ENCODE measurements at regions of chr21 and their contacts with region 1.

Region 1: DNA sequence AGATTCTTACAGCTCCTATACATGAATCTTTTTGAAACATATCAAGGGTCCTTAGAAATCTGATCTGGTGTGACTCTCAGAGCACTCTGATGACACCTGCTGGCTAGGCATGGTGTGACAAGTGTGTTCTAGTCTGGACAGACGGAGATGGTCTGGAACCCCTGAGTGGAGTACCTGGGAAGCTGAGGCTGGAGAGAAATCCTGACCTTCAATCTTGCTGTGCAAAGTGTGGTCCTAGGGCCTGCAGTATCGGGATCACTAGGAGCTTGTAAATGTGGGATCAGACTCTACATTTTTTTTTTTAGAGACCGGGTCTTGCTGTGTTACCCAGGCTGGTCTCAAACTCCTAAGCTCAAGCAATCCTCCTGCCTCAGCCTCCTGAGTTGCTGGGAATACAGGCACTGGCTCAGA is 78.6 kb upstream of the SOD1 start:
- DNase-seq: peak; percentile 87
- ATAC-seq: peak; percentile 95
- H3K4me3 Mint-ChIP-seq: no peak overlapping the region
- H3K27ac Mint-ChIP-seq: no peak overlapping the region
- H3K4me1 Mint-ChIP-seq: 0 out of 2 replicates have a peak, but pooled peaks cover 8% of the 10 kb centered on the region
- H3K27me3 Mint-ChIP-seq: no peaks in the 10 kb centered on the region
- CTCF ChIP-seq: peak; percentile 75

Region 2: GRCh38 chr21:31098576-31099005 is 482.3 kb before region 1 on chr21:
- CTCF ChIA-PET with region 1: interaction called, 11 read pairs
- POLR2A ChIA-PET with region 1: no interaction called
- DNase-seq: peak; percentile 84
- ATAC-seq: peak; percentile 90
- H3K4me3 Mint-ChIP-seq: no peak overlapping the region
- H3K27ac Mint-ChIP-seq: no peak overlapping the region
- H3K4me1 Mint-ChIP-seq: peaks cover 10% of the 10 kb centered on the region
- H3K27me3 Mint-ChIP-seq: no peaks in the 10 kb centered on the region; the same call in 1 of the 2 replicates
- CTCF ChIP-seq: peak; percentile 64

Region 3: DNA sequence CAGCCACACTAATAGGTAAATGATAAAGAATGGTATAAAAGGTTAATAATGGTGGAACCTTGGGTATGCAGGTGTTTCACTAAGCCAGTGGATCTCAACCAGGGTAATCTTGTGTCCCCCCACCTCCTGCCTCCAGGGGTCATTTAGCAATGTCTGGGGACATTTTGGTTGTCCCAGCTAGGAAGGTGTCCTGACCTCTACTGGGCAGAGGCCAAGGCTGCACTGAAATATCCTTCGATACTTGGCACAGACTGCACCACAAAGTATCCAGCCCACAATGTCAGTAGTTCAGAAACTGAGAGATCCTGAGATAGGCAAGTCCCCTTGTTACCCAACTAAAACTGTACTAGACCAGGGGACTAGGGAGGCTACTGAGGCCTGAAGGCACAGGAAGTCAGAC is 123.2 kb before region 1 on chr21:
- CTCF ChIA-PET with region 1: interaction called, 37 read pairs
- POLR2A ChIA-PET with region 1: no interaction called
- DNase-seq: peak; percentile 41
- ATAC-seq: peak; percentile 85
- H3K4me3 Mint-ChIP-seq: no peak overlapping the region
- H3K27ac Mint-ChIP-seq: no peak overlapping the region
- H3K4me1 Mint-ChIP-seq: peaks cover 3% of the 10 kb centered on the region
- H3K27me3 Mint-ChIP-seq: no peaks in the 10 kb centered on the region
- CTCF ChIP-seq: 0 out of 2 replicates have a peak, but pooled peaks have one; percentile 11

Region 4: DNA sequence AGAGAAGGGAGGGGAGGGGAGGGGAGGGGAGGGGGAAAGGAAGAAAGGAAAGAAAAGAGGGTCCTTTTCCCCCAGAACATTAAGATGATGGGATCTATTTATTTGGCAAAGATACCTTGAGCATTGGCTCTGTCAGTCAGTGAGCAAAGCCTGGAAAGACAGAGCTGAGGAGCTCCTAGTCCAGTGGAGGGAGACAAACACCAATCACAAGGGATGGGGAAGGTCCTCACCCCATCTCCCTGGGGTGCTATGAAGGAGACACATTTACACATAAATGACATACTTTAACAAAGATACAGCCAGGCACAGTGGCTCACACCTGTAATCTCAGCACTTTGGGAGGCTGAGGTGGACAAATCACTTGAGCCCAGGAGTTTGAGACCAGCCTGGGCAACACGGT is 81.9 kb before region 1 on chr21:
- CTCF ChIA-PET with region 1: interaction called, 16 read pairs
- POLR2A ChIA-PET with region 1: no interaction called
- DNase-seq: no peak
- ATAC-seq: peak; percentile 86
- H3K4me3 Mint-ChIP-seq: no peak overlapping the region
- H3K27ac Mint-ChIP-seq: peak overlapping the region; percentile 78
- H3K4me1 Mint-ChIP-seq: peaks cover 28% of the 10 kb centered on the region
- H3K27me3 Mint-ChIP-seq: no peaks in the 10 kb centered on the region
- CTCF ChIP-seq: no peak

Region 5: GRCh38 chr21:31548688-31549087 is 32.2 kb before region 1 on chr21:
- CTCF ChIA-PET with region 1: interaction called, 20 read pairs
- POLR2A ChIA-PET with region 1: no interaction called
- DNase-seq: no peak
- ATAC-seq: peak; percentile 38; the same call in 1 of the 2 replicates
- H3K4me3 Mint-ChIP-seq: no peak overlapping the region
- H3K27ac Mint-ChIP-seq: 0 out of 2 replicates have a peak overlapping the region, but pooled peaks have one; percentile 12
- H3K4me1 Mint-ChIP-seq: peaks cover 47% of the 10 kb centered on the region
- H3K27me3 Mint-ChIP-seq: no peaks in the 10 kb centered on the region
- CTCF ChIP-seq: no peak

Region 6: DNA sequence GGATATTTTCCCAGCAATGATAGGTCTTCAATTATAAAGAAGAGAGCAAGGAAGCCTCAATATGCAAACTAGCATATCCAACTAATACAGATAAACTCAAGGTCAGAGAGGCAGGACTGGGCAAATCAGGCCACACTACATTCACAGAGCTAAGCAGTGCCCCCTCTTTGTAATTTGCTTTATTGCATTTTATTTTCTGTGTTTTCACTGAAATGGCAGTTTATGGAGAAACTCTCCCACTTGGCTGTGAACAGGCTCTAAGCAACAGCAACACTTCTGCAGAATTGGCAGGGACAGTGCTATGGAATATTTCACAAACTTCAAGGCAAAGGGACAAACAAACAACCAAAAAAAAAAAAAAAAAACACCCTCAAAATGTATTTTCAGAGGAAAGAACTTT is 14.8 kb before region 1 on chr21:
- CTCF ChIA-PET with region 1: interaction called, 25 read pairs
- POLR2A ChIA-PET with region 1: no interaction called
- DNase-seq: no peak
- ATAC-seq: peak; percentile 38; the same call in 1 of the 2 replicates
- H3K4me3 Mint-ChIP-seq: no peak overlapping the region
- H3K27ac Mint-ChIP-seq: peak overlapping the region; percentile 75; the same call in 1 of the 2 replicates
- H3K4me1 Mint-ChIP-seq: peaks cover 36% of the 10 kb centered on the region
- H3K27me3 Mint-ChIP-seq: no peaks in the 10 kb centered on the region; the same call in 1 of the 2 replicates
- CTCF ChIP-seq: no peak

Region 7: DNA sequence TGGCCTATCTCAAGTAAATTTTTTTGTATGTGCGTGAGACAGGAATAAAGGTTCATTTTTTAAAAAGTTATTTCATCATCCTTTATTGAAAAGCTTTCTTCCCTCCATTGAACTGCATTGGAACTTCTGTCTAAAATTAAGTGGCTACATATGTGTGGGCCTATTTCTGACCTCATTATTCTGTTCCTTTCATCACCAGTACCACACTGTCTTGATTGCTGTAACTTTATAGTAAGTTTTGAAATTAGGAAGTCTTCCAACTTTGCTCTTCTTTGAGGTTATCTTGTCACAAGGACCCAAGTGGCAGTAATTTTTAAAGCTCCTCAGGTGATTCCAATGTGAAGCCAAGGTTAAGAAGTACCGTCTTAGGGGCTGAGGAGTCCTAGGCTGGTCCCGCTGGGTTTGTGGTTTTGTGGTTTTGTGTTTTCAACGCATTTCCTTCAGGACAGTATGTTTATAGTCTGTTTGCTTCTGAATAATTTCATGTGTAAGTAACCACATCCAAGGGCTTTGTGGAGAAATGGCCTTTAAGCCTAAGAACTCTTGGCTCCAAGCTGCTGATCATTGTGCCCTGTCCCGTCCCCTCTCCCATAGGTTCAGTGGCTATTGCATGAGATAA is 163.4 kb after region 1 on chr21:
- CTCF ChIA-PET with region 1: no interaction called
- POLR2A ChIA-PET with region 1: no interaction called
- DNase-seq: no peak
- ATAC-seq: no peak
- H3K4me3 Mint-ChIP-seq: no peak overlapping the region
- H3K27ac Mint-ChIP-seq: no peak overlapping the region
- H3K4me1 Mint-ChIP-seq: no peaks in the 10 kb centered on the region
- H3K27me3 Mint-ChIP-seq: no peaks in the 10 kb centered on the region; the same call in 1 of the 2 replicates
- CTCF ChIP-seq: no peak

Measured in WTC11 (cell line).